Pancreas (tissue), 10 donors: ENCODE measurements at regions of chr16 and their contacts with region 1.

Region 1: DNA sequence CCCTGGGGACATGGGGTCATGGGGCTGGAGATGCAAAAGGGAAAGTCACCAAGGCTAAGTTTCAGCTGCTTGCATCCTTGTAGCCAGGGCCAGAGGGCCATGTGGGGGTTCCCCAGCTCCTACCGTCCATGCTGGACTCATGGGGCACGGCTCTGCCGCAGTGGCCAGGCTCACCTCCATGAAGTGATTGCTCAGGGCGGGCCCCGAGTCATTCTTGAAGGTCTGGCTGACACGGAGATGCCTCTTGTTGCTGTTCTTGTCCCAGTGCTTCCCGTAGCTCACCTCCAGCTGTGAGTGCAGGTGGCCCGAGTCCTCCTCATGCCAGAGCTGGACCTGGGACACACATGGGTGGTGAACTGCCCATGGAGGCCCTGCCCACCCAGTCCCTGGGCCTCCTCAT is 114.5 kb downstream of the RMI2 start:
- DNase-seq: no peak
- ATAC-seq: no peak
- H3K4me3 ChIP-seq: no peak overlapping the region
- H3K27ac ChIP-seq: no peak overlapping the region
- H3K4me1 ChIP-seq: no peaks in the 10 kb centered on the region
- H3K27me3 ChIP-seq: no peaks in the 10 kb centered on the region
- CTCF ChIP-seq: no peak

Region 2: DNA sequence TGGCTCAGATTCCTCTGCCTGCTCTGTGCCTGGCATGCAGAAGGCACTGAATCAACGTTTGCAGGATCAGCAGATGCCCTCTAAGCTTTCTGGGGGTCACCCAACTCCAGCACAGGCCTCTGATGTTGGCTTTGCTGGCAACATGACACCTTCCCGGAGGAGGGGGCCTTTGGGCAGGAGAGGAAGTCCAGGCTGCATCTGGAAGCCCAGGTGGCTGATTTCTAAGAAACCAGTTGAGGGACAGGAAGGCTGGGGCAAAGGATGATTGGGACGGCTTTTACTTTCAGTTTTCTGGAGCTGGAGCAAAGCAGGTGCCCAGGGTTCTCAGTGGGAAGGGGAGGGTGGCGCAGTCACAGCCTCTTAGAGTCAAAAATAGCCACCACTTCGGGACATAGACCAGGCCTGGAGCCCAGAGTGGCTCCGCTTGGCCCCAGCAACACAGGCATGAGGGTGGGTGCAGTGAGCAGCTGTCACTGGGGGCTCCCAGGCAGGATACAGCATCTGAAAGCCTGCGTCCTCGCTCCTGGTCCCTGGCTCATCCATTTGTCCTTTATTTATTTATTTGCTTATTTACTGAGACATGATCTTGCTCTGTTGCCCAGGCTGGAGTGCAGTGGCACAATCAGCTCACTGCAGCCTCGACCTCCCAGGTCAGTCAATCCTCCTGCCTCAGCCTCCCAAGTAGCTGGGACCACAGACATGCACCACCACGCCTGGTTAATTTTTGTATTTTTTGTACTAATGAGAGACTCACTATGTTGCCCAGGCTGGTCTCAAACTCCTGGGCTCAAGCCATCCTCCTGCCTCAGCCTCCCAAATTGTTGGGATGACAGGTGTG is 218.9 kb before region 1 on chr16:
- intact Hi-C with region 1: no loop called
- DNase-seq: no peak
- ATAC-seq: no peak
- H3K4me3 ChIP-seq: no peak overlapping the region
- H3K27ac ChIP-seq: no peak overlapping the region
- H3K4me1 ChIP-seq: peaks cover 0 to under 1% (median 0%) of the 10 kb centered on the region in 3 donors
- H3K27me3 ChIP-seq: no peaks in the 10 kb centered on the region
- CTCF ChIP-seq: no peak

Region 3: DNA sequence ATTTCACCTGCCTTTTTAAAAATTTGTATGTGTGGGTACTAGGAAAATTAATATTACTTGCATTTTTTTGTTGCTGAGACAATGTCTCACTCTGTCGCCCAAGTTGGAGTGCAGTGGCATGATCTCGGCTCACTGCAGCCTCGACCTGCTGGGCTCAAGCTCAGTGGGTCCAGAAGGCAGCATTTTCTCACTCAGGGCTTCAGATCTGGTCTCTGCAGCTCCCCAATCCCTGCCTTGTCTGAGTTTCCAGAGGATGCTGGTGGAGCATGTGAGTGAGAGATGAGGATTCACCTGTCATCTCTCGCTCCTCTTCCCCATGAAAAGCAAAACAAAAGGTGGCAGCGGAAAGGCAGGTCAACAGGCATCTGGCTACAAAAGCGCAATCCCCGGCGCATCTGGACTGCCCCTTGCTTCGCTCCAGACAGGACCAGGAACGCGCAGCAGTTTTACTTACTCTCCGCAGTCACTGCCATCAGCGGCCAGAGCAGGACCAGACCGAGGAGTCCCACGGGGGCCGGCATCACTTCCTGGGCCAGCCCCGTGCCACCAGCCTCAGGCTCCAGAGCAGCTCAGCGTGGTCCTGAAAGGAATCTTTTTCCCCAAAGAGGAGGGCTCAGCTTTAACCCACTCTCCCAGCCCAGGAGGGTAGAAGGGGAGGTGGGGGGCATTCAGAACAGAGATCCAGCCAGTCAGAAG is 67.1 kb after region 1 on chr16:
- intact Hi-C with region 1: loop called in 1 of 3 experiments (anchors 10 kb)
- DNase-seq: no peak
- ATAC-seq: no peak
- H3K4me3 ChIP-seq: no peak overlapping the region
- H3K27ac ChIP-seq: no peak overlapping the region
- H3K4me1 ChIP-seq: no peaks in the 10 kb centered on the region
- H3K27me3 ChIP-seq: no peaks in the 10 kb centered on the region
- CTCF ChIP-seq: no peak

Region 4: DNA sequence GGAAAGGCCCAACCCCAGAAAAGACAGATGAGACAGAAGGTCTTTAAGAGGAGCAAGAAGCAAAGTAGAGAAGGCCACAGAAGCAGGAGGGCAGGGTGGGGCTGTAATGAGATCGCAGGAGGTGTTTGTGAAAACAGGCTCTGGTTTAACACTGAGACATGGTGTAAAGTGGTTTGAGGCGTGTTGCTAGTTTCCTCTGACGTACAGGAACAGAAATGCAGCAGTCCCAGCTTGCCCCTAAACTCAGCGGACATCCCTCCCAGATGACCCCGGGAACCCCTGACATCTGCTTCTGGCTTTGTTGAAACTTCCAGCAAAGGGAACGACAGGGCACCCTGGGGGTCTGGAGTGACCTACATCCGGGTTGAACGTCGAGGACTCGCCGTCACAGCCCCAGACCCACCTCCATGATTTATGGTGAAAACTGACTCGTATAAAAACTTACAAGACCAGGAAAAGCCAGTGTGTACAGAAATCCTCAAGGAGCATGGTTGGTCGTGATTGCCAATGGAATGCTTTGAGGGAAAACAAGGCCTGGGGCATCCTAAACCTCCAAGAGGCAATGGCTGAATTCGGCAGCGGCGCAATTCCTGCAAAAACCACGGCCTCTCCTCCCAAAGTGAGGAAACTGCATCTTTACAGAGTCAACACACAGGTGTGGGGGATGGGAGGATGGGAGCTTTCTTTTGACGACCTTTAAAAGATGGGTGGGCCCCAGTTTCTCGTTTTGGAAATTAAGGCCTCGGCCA is 101.2 kb after region 1 on chr16:
- intact Hi-C with region 1: no loop called
- DNase-seq: no peak
- ATAC-seq: peak in 3 of 4 donors; percentile 11 to 44 (median 26)
- H3K4me3 ChIP-seq: no peak overlapping the region
- H3K27ac ChIP-seq: peak overlapping the region in 2 of 4 donors; percentile 37 to 46
- H3K4me1 ChIP-seq: no peaks in the 10 kb centered on the region
- H3K27me3 ChIP-seq: no peaks in the 10 kb centered on the region
- CTCF ChIP-seq: no peak

Region 5: GRCh38 chr16:11725457-11725856 is 265.7 kb after region 1 on chr16:
- intact Hi-C with region 1: no loop called
- DNase-seq: no peak
- ATAC-seq: peak in 1 of 4 donors; percentile 33
- H3K4me3 ChIP-seq: no peak overlapping the region
- H3K27ac ChIP-seq: peak overlapping the region in 2 of 4 donors; percentile 77 to 81
- H3K4me1 ChIP-seq: peaks cover 25 to 39% (median 32%) of the 10 kb centered on the region in 3 donors
- H3K27me3 ChIP-seq: no peaks in the 10 kb centered on the region
- CTCF ChIP-seq: no peak